ENCODE measurements at regions of chr1 and their contacts with region 1.

Region 1: DNA sequence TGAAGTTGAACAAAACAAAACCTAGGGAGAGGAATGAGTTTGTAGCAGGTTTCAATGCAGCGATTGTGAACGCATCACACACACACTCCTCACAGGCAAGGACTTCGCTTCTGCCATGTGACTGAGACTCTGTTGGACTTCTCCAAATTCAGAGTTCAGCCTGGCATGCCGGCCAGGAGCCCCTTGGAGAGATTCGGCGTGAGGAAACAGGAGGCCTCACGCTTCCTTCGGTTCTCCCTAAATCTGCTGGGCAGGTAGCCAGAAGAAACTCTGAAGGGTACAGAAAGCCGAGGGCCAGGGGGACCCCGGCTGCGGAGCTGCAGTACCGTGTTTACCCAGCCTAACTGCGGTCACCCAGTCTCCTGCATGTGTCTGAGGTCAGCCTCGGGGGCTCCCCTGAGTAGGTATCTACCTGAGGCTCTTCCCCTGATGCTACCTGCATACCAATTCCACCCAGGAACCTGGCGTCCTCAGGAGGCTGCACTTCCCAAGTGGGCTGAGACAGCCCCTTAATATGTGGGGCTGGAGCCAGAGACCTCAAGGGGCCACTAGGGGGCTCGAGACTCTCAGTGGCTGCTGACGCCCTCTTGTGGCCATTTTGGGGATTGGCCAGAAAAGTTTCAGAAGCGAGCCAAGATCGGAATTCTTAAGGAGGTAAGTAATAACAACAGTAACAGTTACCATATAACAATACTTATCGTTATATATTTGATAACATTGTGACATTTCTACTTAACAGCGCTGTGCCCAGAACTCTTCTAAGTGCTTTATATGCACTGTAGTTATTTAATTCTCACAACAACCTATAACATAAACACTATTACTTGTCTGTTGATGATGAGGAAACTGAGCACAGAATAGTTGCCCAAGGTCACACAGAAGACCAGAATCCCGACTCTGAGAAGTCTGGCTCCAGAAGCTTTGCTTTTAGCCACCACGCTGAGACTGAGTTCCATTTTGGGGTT is 2.7 kb upstream of the ANXA9 start:
- DNase-seq: peak; percentile 92
- ATAC-seq: peak; percentile 56
- H3K4me3 ChIP-seq: peak overlapping the region; percentile 38 to 72 (median 50)
- H3K4me3 Mint-ChIP-seq: peak overlapping the region; percentile 79
- H3K27ac ChIP-seq: no peak overlapping the region
- H3K27ac Mint-ChIP-seq: peak overlapping the region; percentile 88
- H3K4me1 ChIP-seq: peaks cover 22 to 35% of the 10 kb centered on the region in 2 donors
- H3K4me1 Mint-ChIP-seq: peaks cover 31% of the 10 kb centered on the region
- H3K27me3 ChIP-seq: no peaks in the 10 kb centered on the region
- H3K27me3 Mint-ChIP-seq: no peaks in the 10 kb centered on the region
- CTCF ChIP-seq: peak; percentile 100

Region 2: GRCh38 chr1:150464422-150464826 is 515.0 kb before region 1 on chr1:
- CTCF ChIA-PET with region 1: interaction called, 5 read pairs
- POLR2A ChIA-PET with region 1: no interaction called
- intact Hi-C with region 1: loop called (anchors 5 kb)
- DNase-seq: peak; percentile 83
- ATAC-seq: peak; percentile 74
- H3K4me3 ChIP-seq: no peak overlapping the region
- H3K4me3 Mint-ChIP-seq: no peak overlapping the region
- H3K27ac ChIP-seq: no peak overlapping the region
- H3K27ac Mint-ChIP-seq: peak overlapping the region; percentile 5
- H3K4me1 ChIP-seq: peaks cover 0 to 3% of the 10 kb centered on the region in 2 donors
- H3K4me1 Mint-ChIP-seq: peaks cover 4% of the 10 kb centered on the region
- H3K27me3 ChIP-seq: no peaks in the 10 kb centered on the region
- H3K27me3 Mint-ChIP-seq: no peaks in the 10 kb centered on the region
- CTCF ChIP-seq: peak; percentile 82

Region 3: GRCh38 chr1:150876119-150876454 is 103.3 kb before region 1 on chr1:
- CTCF ChIA-PET with region 1: no interaction called
- POLR2A ChIA-PET with region 1: no interaction called
- intact Hi-C with region 1: loop called (anchors 2 kb)
- DNase-seq: no peak
- ATAC-seq: no peak
- H3K4me3 ChIP-seq: peak overlapping the region; percentile 72 to 87 (median 84)
- H3K4me3 Mint-ChIP-seq: peak overlapping the region; percentile 88
- H3K27ac ChIP-seq: peak overlapping the region; percentile 64 to 80
- H3K27ac Mint-ChIP-seq: peak overlapping the region; percentile 90
- H3K4me1 ChIP-seq: peaks cover 20% of the 10 kb centered on the region in 2 donors
- H3K4me1 Mint-ChIP-seq: peaks cover 32% of the 10 kb centered on the region
- H3K27me3 ChIP-seq: no peaks in the 10 kb centered on the region
- H3K27me3 Mint-ChIP-seq: no peaks in the 10 kb centered on the region
- CTCF ChIP-seq: no peak

Region 4: DNA sequence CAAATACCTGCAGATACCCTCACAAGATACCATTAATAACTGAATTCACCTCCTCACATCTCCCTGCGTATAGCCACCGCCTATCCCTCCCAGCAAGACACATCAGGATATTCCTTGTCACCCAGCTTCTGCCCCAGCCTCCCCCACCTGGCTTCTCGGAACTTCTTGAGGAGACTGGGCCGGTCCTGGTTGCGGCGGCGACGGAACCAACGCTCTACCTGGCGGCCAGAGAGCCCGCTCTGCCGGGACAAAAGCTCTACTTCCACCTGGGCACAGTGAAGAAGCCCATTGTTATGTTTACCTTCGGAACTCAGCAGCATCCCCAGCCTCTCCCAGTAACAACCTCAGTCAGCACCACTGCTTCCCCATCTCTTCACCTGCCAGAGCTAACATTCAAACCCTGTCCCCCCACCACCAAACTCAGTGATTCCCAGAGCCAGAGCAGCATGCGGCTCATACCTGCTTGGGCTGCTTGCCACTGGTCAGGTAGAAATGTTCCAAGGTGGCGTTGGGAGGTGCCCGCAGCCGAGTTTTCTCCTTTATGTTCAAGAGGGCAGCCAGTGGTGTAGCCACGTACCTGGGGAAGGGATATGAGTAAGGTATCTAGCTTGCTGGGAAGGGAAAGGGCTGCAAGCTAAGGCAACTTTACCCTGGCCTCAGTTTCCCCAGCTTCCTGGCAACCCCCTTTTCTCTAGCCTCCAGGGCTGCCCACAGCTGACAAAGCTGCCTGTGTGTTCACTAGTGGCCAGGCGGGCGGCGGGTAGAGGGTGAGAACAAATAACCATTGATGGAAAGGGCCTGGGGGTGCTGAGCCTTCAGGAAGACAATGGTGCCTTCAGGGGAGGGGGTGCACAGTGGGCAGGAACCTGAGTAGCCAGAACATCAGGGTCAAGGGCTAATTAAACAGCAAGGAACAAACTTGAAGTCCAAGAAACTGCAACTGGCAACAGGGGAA is 11.2 kb before region 1 on chr1:
- CTCF ChIA-PET with region 1: interaction called, 14 read pairs
- POLR2A ChIA-PET with region 1: interaction called, 3 read pairs
- intact Hi-C with region 1: no loop called
- DNase-seq: no peak
- ATAC-seq: no peak
- H3K4me3 ChIP-seq: no peak overlapping the region
- H3K4me3 Mint-ChIP-seq: no peak overlapping the region
- H3K27ac ChIP-seq: no peak overlapping the region
- H3K27ac Mint-ChIP-seq: peak overlapping the region; percentile 18
- H3K4me1 ChIP-seq: peaks cover 18 to 23% of the 10 kb centered on the region in 2 donors
- H3K4me1 Mint-ChIP-seq: peaks cover 29% of the 10 kb centered on the region
- H3K27me3 ChIP-seq: no peaks in the 10 kb centered on the region
- H3K27me3 Mint-ChIP-seq: no peaks in the 10 kb centered on the region
- CTCF ChIP-seq: no peak

Region 5: GRCh38 chr1:151059078-151059907 is 79.9 kb after region 1 on chr1 and contains the start of gene CDC42SE1:
- CTCF ChIA-PET with region 1: interaction called, 3 read pairs
- POLR2A ChIA-PET with region 1: interaction called, 3 read pairs
- intact Hi-C with region 1: loop called (anchors 5 kb)
- DNase-seq: peak; percentile 92
- ATAC-seq: peak; percentile 85
- H3K4me3 ChIP-seq: peak within 1 kb of the TSS; percentile 87 to 99 (median 97)
- H3K4me3 Mint-ChIP-seq: peak within 1 kb of the TSS; percentile 99
- H3K27ac ChIP-seq: peak within 1 kb of the TSS; percentile 76 to 95
- H3K27ac Mint-ChIP-seq: peak within 1 kb of the TSS; percentile 94
- H3K4me1 ChIP-seq: peaks cover 42 to 46% of the 10 kb centered on the region in 2 donors
- H3K4me1 Mint-ChIP-seq: peaks cover 51% of the 10 kb centered on the region
- H3K27me3 ChIP-seq: no peaks in the 10 kb centered on the region
- H3K27me3 Mint-ChIP-seq: no peaks in the 10 kb centered on the region
- CTCF ChIP-seq: peak; percentile 85
- total RNA-seq, gene CDC42SE1: 230 and 238 TPM in 2 replicates

Region 6: GRCh38 chr1:151175910-151176309 is 196.5 kb after region 1 on chr1 and contains the start of gene TMOD4:
- CTCF ChIA-PET with region 1: no interaction called
- POLR2A ChIA-PET with region 1: no interaction called
- intact Hi-C with region 1: no loop called
- DNase-seq: no peak
- ATAC-seq: peak; percentile 69
- H3K4me3 ChIP-seq: no peak within 1 kb of the TSS
- H3K4me3 Mint-ChIP-seq: no peak within 1 kb of the TSS
- H3K27ac ChIP-seq: no peak within 1 kb of the TSS
- H3K27ac Mint-ChIP-seq: peak within 1 kb of the TSS; percentile 32
- H3K4me1 ChIP-seq: no peaks in the 10 kb centered on the region
- H3K4me1 Mint-ChIP-seq: peaks cover 2% of the 10 kb centered on the region
- H3K27me3 ChIP-seq: no peaks in the 10 kb centered on the region
- H3K27me3 Mint-ChIP-seq: no peaks in the 10 kb centered on the region
- CTCF ChIP-seq: peak; percentile 54
- total RNA-seq, gene TMOD4: 3.5 and 5.1 TPM in 2 replicates

Region 7: DNA sequence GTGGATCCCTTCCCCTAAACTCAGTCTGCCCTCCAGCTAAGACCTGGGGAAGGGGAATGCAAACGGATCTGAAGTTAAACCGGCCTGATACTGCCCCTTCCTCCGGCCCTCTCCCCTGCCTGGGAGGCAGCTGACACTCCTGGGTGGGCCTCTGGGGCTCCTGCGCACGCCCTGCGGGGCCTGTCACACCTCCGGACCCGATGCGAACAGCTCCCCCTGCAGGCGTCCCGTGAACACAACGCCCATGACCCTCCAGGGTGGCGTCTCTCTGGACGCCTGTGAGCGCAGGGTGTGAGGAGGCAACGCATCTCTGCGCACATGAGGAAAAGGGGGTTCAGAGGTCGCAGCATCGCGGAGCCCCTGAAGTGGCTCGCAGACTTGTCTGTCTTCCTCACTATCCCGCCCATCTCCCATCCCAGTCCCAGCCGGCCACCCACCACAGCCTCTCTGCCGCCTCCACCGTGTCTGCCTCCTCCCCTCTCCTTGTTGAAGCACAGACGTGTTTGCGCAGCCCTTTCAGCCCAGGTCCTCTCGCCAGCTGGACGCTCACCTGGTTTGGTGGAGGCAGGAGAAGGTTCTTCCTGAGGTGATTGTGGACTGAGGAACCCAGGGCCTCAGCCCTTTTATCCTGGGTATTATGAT is 1644.0 kb after region 1 on chr1:
- CTCF ChIA-PET with region 1: no interaction called
- POLR2A ChIA-PET with region 1: no interaction called
- intact Hi-C with region 1: no loop called
- DNase-seq: no peak
- ATAC-seq: no peak
- H3K4me3 ChIP-seq: no peak overlapping the region
- H3K4me3 Mint-ChIP-seq: no peak overlapping the region
- H3K27ac ChIP-seq: no peak overlapping the region
- H3K27ac Mint-ChIP-seq: no peak overlapping the region
- H3K4me1 ChIP-seq: no peaks in the 10 kb centered on the region
- H3K4me1 Mint-ChIP-seq: no peaks in the 10 kb centered on the region
- H3K27me3 ChIP-seq: peaks cover 0 to 12% (median 0%) of the 10 kb centered on the region in 4 experiments
- H3K27me3 Mint-ChIP-seq: peaks cover 41% of the 10 kb centered on the region
- CTCF ChIP-seq: no peak

Measured in B cell (primary cell).